PC-3 (cell line): ENCODE measurements at regions of chr1 and their contacts with region 1.

Region 1: DNA sequence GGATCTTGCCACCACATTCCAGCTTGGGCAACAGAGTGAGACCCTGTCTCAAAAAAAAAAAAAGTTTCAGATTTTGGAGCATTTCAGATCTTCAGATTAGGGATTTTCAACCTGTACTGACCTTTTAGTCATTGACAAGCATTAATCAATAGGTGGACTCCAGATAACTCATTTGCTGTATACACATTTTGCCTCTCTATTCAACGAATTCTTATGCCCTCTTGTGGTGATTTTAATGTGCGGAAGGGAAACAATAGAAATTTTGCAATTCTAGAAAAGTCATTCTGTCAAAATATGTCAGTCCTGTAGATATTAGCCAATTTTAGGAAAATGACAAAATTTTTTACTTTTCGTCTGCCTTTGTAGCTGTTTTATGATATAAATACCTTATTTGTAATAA is 11.7 kb upstream of the OR2G2 start:
- DNase-seq: peak; percentile 82
- ATAC-seq: peak; percentile 63
- H3K4me3 ChIP-seq: no peak overlapping the region
- H3K27ac ChIP-seq: no peak overlapping the region
- H3K4me1 ChIP-seq: no peaks in the 10 kb centered on the region
- H3K27me3 ChIP-seq: peaks cover 21% of the 10 kb centered on the region; the same call in 1 of the 2 replicates
- CTCF ChIP-seq: peak; percentile 95

Region 2: GRCh38 chr1:247390116-247390791 is 186.2 kb before region 1 on chr1:
- CTCF ChIA-PET with region 1: no interaction called
- POLR2A ChIA-PET with region 1: no interaction called
- intact Hi-C with region 1: loop called (anchors 1 kb)
- DNase-seq: peak; percentile 98
- ATAC-seq: peak; percentile 84
- H3K4me3 ChIP-seq: peak overlapping the region; percentile 26; the same call in 1 of the 2 replicates
- H3K27ac ChIP-seq: no peak overlapping the region
- H3K4me1 ChIP-seq: peaks cover 24% of the 10 kb centered on the region
- H3K27me3 ChIP-seq: no peaks in the 10 kb centered on the region
- CTCF ChIP-seq: peak; percentile 99

Region 3: GRCh38 chr1:247528812-247529474 is 47.6 kb before region 1 on chr1:
- CTCF ChIA-PET with region 1: no interaction called
- POLR2A ChIA-PET with region 1: no interaction called
- intact Hi-C with region 1: loop called (anchors 1 kb)
- DNase-seq: peak; percentile 100
- ATAC-seq: peak; percentile 95
- H3K4me3 ChIP-seq: peak overlapping the region; percentile 3; the same call in 1 of the 2 replicates
- H3K27ac ChIP-seq: peak overlapping the region; percentile 71
- H3K4me1 ChIP-seq: peaks cover 23% of the 10 kb centered on the region
- H3K27me3 ChIP-seq: no peaks in the 10 kb centered on the region
- CTCF ChIP-seq: peak; percentile 42

Region 4: DNA sequence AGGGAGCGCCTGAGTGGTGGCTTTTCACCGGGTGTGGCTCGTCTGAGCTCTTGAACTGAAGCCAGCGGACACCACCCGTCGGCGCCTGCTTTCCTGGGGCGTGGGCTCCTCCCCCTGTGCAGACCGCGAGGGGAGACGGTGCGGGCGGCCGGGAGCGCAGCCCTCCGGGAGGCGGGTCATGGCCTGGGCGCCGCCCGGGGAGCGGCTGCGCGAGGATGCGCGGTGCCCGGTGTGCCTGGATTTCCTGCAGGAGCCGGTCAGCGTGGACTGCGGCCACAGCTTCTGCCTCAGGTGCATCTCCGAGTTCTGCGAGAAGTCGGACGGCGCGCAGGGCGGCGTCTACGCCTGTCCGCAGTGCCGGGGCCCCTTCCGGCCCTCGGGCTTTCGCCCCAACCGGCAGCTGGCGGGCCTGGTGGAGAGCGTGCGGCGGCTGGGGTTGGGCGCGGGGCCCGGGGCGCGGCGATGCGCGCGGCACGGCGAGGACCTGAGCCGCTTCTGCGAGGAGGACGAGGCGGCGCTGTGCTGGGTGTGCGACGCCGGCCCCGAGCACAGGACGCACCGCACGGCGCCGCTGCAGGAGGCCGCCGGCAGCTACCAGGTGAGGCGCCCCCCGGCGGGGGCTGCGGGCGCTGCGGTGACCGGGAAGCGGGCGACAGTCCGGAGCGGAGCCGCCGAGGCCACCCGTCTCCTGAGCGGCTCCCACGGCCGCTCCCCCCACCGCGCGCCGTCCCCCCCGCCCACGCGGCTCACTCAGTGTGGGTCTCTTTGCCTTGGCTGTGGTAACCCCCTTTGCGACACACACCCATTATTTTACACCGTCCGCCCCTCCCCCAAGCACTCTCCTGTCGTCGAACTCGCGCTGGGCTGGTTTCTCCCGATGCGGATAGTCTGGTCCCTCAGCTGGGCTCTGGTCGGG is 280.8 kb after region 1 on chr1 and contains the start of gene TRIM58:
- CTCF ChIA-PET with region 1: no interaction called
- POLR2A ChIA-PET with region 1: no interaction called
- intact Hi-C with region 1: loop called (anchors 5 kb)
- DNase-seq: peak; percentile 96
- ATAC-seq: peak; percentile 83
- H3K4me3 ChIP-seq: peak within 1 kb of the TSS; percentile 72
- H3K27ac ChIP-seq: peak within 1 kb of the TSS; percentile 62
- H3K4me1 ChIP-seq: peaks cover 26% of the 10 kb centered on the region
- H3K27me3 ChIP-seq: no peaks in the 10 kb centered on the region
- CTCF ChIP-seq: peak; percentile 85
- total RNA-seq, gene TRIM58: 22.7 and 46.9 TPM in 2 replicates